ENCODE measurements at regions of chr12 and their contacts with region 1.

Region 1: GRCh38 chr12:12456637-12457036 is 99.8 kb downstream of the BORCS5 start:
- DNase-seq: no peak
- H3K4me3 Mint-ChIP-seq: peak overlapping the region; percentile 58
- H3K27ac Mint-ChIP-seq: peak overlapping the region; percentile 88
- H3K4me1 Mint-ChIP-seq: peaks cover 60% of the 10 kb centered on the region
- H3K27me3 Mint-ChIP-seq: no peaks in the 10 kb centered on the region

Region 2: GRCh38 chr12:12425616-12426015 is 31.0 kb before region 1 on chr12:
- intact Hi-C with region 1: loop called (anchors 5 kb)
- DNase-seq: no peak
- H3K4me3 Mint-ChIP-seq: no peak overlapping the region
- H3K27ac Mint-ChIP-seq: no peak overlapping the region
- H3K4me1 Mint-ChIP-seq: peaks cover 46% of the 10 kb centered on the region
- H3K27me3 Mint-ChIP-seq: no peaks in the 10 kb centered on the region

Region 3: GRCh38 chr12:12442548-12443071 is 14.0 kb before region 1 on chr12:
- intact Hi-C with region 1: loop called (anchors 1 kb)
- DNase-seq: no peak
- H3K4me3 Mint-ChIP-seq: peak overlapping the region; percentile 34
- H3K27ac Mint-ChIP-seq: peak overlapping the region; percentile 95
- H3K4me1 Mint-ChIP-seq: peaks cover 74% of the 10 kb centered on the region
- H3K27me3 Mint-ChIP-seq: no peaks in the 10 kb centered on the region

Region 4: GRCh38 chr12:12486661-12487240 is 30.1 kb after region 1 on chr12:
- intact Hi-C with region 1: no loop called
- DNase-seq: no peak
- H3K4me3 Mint-ChIP-seq: no peak overlapping the region
- H3K27ac Mint-ChIP-seq: peak overlapping the region; percentile 59
- H3K4me1 Mint-ChIP-seq: peaks cover 55% of the 10 kb centered on the region
- H3K27me3 Mint-ChIP-seq: no peaks in the 10 kb centered on the region

Measured in activated T-helper 1 cell treated with anti-CD3 and anti-CD28 coated beads, Interleukin-12 subunit alpha, Interleukin-12 subunit beta, Interleukin-2, Interleukin-4 antibody, amounts not matched to agents 30 ng/mL and 10 ng/mL and 1 ng/mL, durations not matched to agents 14 hours and 24 hours and 36 hours (primary cell).